CD4-positive, alpha-beta memory T cell (primary cell): ENCODE measurements at regions of chr2 and their contacts with region 1.

Region 1: DNA sequence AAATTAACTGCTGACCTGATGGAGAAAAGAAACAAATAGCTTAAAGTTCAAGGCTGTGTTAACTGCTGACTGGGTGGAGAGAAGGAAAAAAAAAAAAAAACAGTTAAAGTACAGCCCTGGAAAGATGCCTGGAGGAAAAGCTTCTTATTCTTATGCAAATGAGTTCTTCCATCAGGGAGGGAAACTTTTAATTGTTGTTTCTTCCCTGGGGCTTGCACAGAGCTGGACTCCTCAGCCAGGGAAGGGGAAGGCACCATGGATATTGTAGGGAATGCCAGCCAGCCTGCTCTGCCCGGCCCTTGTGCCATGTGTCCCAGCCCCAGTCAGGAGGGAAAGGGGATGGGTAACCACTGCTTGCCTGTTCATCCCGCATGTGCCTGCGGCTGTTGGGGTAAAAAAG is 833.1 kb upstream of the CRIM1 start:
- DNase-seq: peak in 1 of 5 donors; percentile 32
- H3K4me3 ChIP-seq: no peak overlapping the region
- H3K4me3 Mint-ChIP-seq: no peak overlapping the region
- H3K27ac ChIP-seq: no peak overlapping the region
- H3K27ac Mint-ChIP-seq: no peak overlapping the region
- H3K4me1 ChIP-seq: no peaks in the 10 kb centered on the region
- H3K4me1 Mint-ChIP-seq: peaks cover 0 to 1% (median 0%) of the 10 kb centered on the region in 4 donors
- H3K27me3 ChIP-seq: no peaks in the 10 kb centered on the region
- H3K27me3 Mint-ChIP-seq: no peaks in the 10 kb centered on the region

Region 2: GRCh38 chr2:35495182-35495581 is 27.3 kb before region 1 on chr2:
- CTCF ChIA-PET with region 1: no interaction called
- POLR2A ChIA-PET with region 1: no interaction called
- intact Hi-C with region 1: loop called (anchors 1 kb)
- DNase-seq: no peak
- H3K4me3 ChIP-seq: no peak overlapping the region
- H3K4me3 Mint-ChIP-seq: no peak overlapping the region
- H3K27ac ChIP-seq: no peak overlapping the region
- H3K27ac Mint-ChIP-seq: no peak overlapping the region
- H3K4me1 ChIP-seq: no peaks in the 10 kb centered on the region
- H3K4me1 Mint-ChIP-seq: no peaks in the 10 kb centered on the region
- H3K27me3 ChIP-seq: no peaks in the 10 kb centered on the region
- H3K27me3 Mint-ChIP-seq: no peaks in the 10 kb centered on the region